ENCODE measurements at regions of chr18 and their contacts with region 1.

Region 1: GRCh38 chr18:51687845-51688585 is 490.5 kb upstream of the MEX3C start:
- DNase-seq: no peak
- ATAC-seq: no peak
- H3K4me3 ChIP-seq: no peak overlapping the region
- H3K27ac ChIP-seq: no peak overlapping the region
- H3K4me1 ChIP-seq: no peaks in the 10 kb centered on the region
- H3K27me3 ChIP-seq: no peaks in the 10 kb centered on the region
- CTCF ChIP-seq: no peak
- POLR2A ChIP-seq: no peak

Region 2: DNA sequence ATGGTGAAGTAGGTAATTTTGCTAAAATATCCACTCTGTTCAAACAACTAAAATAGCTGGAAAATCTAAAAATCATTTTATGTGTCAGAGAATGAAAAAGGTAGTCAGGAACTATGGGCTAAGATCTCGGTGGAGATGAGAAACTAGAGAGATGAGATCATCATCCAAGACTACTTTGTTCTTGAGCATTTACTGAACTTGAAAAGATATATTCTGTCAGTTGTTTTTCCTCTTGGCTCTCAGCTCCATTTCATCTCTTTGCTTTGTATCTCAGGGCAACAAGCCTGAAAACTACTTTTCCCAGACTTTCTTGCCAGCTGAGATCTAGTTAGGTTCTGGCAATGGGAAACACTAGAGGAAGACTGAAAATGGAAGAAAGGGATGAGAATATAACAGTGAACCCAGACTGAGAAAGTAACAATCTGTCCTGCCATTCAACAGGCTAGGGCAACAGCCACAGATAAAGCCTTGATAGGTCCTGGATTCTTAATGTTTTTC is 144.3 kb before region 1 on chr18:
- in situ Hi-C with region 1: no loop called
- intact Hi-C with region 1: no loop called
- DNase-seq: no peak
- ATAC-seq: no peak
- H3K4me3 ChIP-seq: no peak overlapping the region
- H3K27ac ChIP-seq: no peak overlapping the region
- H3K4me1 ChIP-seq: no peaks in the 10 kb centered on the region
- H3K27me3 ChIP-seq: no peaks in the 10 kb centered on the region
- CTCF ChIP-seq: no peak
- POLR2A ChIP-seq: no peak

Region 3: DNA sequence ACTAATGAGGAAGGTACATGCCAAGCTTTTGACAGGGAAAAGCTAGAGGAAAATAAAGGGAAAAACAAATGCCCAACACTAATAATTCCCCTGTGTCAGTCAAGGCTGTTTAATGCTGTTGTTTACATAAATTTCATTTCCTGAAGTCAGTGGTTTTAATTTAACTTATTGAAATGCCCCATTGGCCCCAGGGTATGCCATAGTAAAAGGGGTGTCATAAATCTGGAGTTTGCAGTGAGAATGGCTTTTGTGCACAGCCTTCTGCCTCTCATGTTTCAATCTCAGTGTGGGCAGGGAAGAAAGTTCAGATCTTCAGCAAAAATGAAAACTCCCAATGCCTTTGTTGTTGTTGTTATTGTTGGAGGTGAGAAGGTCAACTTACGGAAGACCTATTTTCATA is 101.9 kb after region 1 on chr18:
- in situ Hi-C with region 1: loop called in 1 of 4 experiments (anchors 25 kb)
- intact Hi-C with region 1: no loop called
- DNase-seq: no peak
- ATAC-seq: no peak
- H3K4me3 ChIP-seq: no peak overlapping the region
- H3K27ac ChIP-seq: no peak overlapping the region
- H3K4me1 ChIP-seq: no peaks in the 10 kb centered on the region
- H3K27me3 ChIP-seq: no peaks in the 10 kb centered on the region
- CTCF ChIP-seq: no peak
- POLR2A ChIP-seq: no peak